ENCODE measurements at regions of chr1 and their contacts with region 1.

Region 1: GRCh38 chr1:40531381-40532061 is at the start of gene ZNF684:
- DNase-seq: peak; percentile 91

Region 2: GRCh38 chr1:40449684-40450494 is 81.6 kb before region 1 on chr1 and contains the start of gene ZFP69B:
- CTCF ChIA-PET with region 1: interaction called, 6 read pairs
- POLR2A ChIA-PET with region 1: interaction called, 22 read pairs
- DNase-seq: peak; percentile 96

Region 3: DNA sequence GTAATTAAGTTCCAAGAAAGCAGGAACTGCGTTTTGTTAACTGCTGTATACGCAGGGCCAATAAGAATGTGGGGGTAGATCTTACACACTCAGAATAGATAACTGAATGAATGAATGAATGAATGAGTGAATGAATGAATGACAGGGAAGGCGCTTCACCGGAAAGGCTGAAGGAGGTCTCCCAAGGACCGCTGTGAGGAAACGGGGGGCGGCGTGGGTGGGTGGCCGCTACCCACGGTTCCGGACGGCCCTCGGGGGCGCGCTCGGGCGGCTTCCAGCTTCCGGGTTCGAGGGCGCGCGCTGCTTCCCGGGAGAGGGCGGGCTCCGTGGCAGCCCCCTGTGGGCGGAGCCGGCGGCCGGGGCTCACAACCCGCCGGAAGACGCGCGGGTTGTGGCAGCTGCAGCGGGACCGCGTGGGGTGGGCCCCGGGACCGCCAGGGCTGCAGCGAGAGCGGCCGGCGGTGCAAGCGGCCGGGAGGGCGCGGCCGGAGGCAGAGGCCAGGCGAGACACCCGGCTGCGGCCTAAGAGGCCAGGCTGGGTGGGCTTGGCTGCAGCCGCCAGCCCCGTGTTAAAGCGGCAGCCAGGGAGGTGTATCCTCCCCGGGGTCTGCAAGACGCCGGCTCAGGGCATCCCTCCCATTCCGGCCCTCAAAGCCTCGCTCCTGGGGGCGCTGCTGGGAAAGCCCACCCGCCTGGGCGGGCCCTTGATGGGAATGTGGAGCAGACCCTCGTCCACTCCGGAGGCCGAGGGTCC is 54.4 kb before region 1 on chr1 and contains the start of gene ZFP69:
- CTCF ChIA-PET with region 1: no interaction called
- POLR2A ChIA-PET with region 1: interaction called, 12 read pairs
- DNase-seq: peak; percentile 89

Region 4: GRCh38 chr1:40508375-40509341 is 22.9 kb before region 1 on chr1 and contains the start of gene EXO5:
- CTCF ChIA-PET with region 1: no interaction called
- POLR2A ChIA-PET with region 1: interaction called, 27 read pairs
- DNase-seq: peak; percentile 51

Region 5: DNA sequence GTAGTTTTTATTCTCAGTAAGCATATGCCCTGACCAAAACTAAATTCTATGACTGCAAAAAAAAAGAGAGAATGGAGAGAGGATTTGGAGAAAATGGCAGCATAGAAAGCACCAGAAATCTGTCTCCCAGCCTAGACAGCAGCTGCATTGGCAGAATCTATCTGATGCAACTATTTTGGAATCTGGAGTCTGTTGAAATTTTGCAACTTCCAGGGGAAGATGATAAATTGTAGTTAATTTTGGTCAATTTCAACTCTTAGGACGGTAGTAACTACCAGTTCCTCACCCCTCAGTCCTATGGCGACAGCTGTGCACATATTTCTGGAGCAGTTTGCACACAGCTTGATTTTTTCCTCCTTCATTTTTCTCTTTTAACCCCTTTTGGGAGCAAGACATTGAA is 12.0 kb before region 1 on chr1:
- CTCF ChIA-PET with region 1: no interaction called
- POLR2A ChIA-PET with region 1: interaction called, 12 read pairs
- DNase-seq: no peak

Region 6: GRCh38 chr1:40582116-40582515 is 50.6 kb after region 1 on chr1:
- CTCF ChIA-PET with region 1: no interaction called
- POLR2A ChIA-PET with region 1: no interaction called
- DNase-seq: no peak